Mucosa of descending colon (tissue), 3 donors: ENCODE measurements at regions of chr14 and their contacts with region 1.

Region 1: GRCh38 chr14:102774391-102775153 is 2.7 kb upstream of the TRAF3 start:
- DNase-seq: peak; percentile 44 to 83 (median 52)
- ATAC-seq: peak; percentile 71
- H3K4me3 ChIP-seq: no peak overlapping the region
- H3K4me1 ChIP-seq: peaks cover 7% of the 10 kb centered on the region
- CTCF ChIP-seq: peak; percentile 57

Region 2: DNA sequence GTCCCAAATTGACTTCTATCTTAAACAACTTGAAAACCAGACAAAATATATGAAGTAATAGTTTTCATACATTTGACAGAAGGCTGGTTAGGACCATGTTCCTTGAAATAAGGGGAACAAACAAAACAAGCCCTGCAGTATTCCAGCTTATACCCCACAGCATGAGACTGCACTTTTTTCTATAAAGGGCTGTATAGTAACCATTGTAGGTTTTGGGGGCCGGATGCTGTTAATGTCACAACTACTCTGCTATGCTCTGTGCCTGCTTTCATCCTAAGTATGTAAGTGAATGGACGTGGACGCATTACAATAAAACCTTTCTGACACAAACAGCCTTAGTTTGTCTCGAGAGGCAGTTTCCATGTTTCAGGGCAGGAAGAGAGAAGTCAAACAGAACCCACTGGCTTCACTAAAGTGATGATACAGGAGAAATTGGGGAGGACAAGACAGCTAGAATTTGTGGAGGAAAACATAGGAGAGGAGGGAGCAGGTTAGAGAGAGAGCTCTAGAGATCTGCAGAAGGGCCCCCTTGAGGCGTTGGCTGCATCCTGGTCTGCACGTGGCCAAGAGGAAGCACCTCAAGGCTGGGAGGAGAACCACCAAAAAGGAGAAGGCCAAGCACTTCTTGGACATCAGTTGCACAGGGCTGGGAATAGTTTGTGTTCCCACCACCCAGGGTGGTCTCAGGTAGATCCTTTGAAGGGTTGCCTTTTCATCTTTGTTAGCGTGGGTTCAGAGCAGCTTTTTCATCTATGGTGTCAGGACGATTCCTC is 66.4 kb after region 1 on chr14:
- intact Hi-C with region 1: no loop called
- DNase-seq: no peak
- ATAC-seq: peak; percentile 13
- H3K4me3 ChIP-seq: no peak overlapping the region
- H3K4me1 ChIP-seq: no peaks in the 10 kb centered on the region
- CTCF ChIP-seq: no peak

Region 3: DNA sequence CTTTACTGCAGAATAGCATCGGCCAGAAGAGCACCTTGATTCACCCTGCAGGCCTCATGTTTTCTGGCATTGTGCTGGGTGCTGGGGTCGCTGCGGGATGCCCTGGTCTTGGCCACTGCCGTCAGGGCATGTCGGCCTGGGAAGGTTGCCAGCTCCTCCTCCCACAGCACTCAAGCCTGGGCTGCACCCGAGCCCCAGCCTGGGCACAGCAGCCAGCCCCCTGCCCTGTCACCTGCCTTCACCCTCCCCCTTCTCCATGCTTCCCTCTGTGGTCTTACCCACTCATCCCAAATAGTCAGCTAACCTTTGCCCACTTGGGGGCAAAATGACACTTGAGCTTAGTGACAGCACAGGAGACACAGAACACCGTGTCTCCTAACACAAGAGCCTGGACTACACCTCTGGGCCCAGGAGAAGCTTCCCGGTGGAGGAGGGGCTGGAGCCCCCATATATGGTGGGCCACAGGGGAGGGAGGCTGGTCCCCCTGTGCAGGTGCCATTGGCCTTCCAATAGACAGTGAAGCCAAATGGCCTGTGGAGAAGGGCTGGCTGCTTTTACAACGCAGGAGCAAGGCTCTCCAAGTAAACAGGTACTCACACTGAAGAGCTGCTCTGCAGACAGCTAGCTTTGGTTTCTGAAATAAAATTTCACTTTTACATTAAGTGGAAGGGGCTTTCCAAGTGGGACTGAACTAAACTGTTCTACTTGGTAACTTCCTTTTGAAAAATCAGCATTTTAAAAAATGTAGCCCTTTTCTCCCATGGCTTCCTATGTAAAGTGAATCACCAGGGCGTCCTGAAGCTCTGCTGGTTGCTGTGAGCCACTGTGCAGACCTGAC is 96.6 kb after region 1 on chr14:
- intact Hi-C with region 1: no loop called
- DNase-seq: no peak
- ATAC-seq: no peak
- H3K4me3 ChIP-seq: no peak overlapping the region
- H3K4me1 ChIP-seq: peaks cover 38% of the 10 kb centered on the region
- CTCF ChIP-seq: no peak

Region 4: GRCh38 chr14:102917469-102918211 is 143.1 kb after region 1 on chr14:
- intact Hi-C with region 1: loop called (anchors 10 kb)
- DNase-seq: peak; percentile 64 to 87 (median 73)
- ATAC-seq: peak; percentile 9
- H3K4me3 ChIP-seq: no peak overlapping the region
- H3K4me1 ChIP-seq: no peaks in the 10 kb centered on the region
- CTCF ChIP-seq: peak; percentile 14

Region 5: GRCh38 chr14:102928412-102929240 is 154.1 kb after region 1 on chr14:
- intact Hi-C with region 1: loop called in 1 of 2 experiments (anchors 10 kb)
- DNase-seq: peak; percentile 95 to 97 (median 96)
- ATAC-seq: peak; percentile 81
- H3K4me3 ChIP-seq: peak overlapping the region; percentile 32
- H3K4me1 ChIP-seq: peaks cover 26% of the 10 kb centered on the region
- CTCF ChIP-seq: no peak